ENCODE measurements at regions of chr17 and their contacts with region 1.

Region 1: DNA sequence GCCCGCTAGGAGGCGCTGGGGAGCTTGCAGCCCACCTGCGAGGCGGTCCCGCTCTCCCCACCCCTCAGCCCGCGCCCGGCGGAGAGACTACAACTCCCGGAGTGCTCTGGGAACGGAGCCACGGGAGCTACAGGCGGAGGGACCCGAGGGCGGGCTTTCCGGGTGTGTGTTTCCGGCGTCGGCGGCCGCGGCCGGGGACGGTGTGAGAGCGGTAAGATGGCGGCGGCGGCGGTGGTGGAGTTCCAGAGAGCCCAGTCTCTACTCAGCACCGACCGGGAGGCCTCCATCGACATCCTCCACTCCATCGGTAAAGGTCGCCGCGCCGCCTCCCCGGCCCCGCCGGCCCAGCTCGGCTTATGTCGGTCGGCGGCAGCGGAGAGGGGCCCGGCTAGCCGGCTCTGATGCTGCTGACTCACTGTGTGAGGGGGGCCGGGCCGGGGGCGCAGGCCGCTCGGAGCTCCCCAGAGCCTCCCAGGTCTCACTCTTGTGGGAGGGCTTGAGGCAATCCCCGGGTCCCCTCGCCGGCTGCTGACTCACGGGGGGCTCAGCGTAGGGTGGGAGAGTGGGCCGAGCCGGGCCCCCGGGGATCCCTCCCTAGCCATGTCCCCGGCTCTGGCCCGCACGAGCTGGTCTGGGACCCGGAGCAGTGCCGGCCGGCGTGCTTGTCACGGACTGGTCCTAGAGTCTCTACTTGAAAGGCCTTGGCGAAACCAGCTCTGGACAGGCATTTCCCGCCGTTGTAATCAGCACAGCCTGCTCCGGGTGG is at the start of gene PSMD11:
- DNase-seq: peak; percentile 87 to 90 (median 88)
- H3K4me3 ChIP-seq: peak within 1 kb of the TSS; percentile 63 to 95 (median 84)
- H3K4me3 Mint-ChIP-seq: peak within 1 kb of the TSS; percentile 91 to 93
- H3K27ac ChIP-seq: peak within 1 kb of the TSS; percentile 38 to 87
- H3K27ac Mint-ChIP-seq: peak within 1 kb of the TSS; percentile 78 to 93 (median 91)
- H3K4me1 ChIP-seq: peaks cover 18 to 26% of the 10 kb centered on the region in 2 donors
- H3K4me1 Mint-ChIP-seq: peaks cover 24% of the 10 kb centered on the region
- H3K27me3 ChIP-seq: no peaks in the 10 kb centered on the region
- H3K27me3 Mint-ChIP-seq: peaks cover 11 to 20% (median 16%) of the 10 kb centered on the region in 3 donors
- CTCF ChIP-seq: no peak
- polyA plus RNA-seq, gene PSMD11: 29.9 to 112 (median 91.8) TPM

Region 2: DNA sequence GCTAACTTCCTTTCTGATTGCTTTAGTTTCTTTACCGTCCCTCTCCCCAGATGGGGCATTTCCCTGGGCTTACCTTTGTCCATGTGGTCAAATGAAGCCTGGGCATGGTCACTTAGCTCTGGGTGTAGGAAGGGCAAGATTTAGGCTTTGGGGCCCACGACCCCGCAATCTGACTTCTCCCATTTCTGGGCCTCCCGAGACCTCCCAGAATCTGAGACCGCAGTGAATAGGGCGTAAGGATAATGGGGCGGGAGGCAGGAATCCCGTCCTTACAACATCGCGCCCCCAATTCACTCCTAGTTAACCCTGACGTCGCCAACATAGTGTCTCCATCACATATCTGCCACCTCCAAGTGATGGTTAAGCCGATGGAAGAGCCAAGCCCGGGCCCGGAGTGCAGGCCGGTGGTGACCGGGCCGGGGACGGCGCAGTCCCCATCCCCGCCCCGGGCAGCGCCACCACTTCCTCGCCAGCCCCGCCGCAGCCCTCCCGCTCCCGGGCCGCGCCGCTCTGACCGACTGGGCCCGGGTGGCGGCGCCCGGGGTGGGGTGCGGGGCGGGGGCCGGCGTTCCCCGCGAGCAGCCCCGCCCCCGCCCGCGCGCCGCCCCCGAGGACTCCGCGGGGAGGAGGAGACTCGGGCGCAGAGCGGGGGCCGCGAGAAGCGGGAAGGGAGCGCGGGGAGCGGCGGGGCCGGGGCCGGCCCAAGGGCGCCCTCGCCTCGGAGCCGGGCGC is 179.1 kb before region 1 on chr17 and contains the start of gene RHBDL3:
- intact Hi-C with region 1: loop called in 1 of 2 experiments (anchors 10 kb)
- DNase-seq: peak in 1 of 3 donors; percentile 17
- H3K4me3 ChIP-seq: peak within 1 kb of the TSS; percentile 12 to 70 (median 48)
- H3K4me3 Mint-ChIP-seq: peak within 1 kb of the TSS; percentile 81 to 88
- H3K27ac ChIP-seq: no peak within 1 kb of the TSS
- H3K27ac Mint-ChIP-seq: peak within 1 kb of the TSS in 4 of 7 donors; percentile 41 to 63 (median 53)
- H3K4me1 ChIP-seq: peaks cover 14 to 21% of the 10 kb centered on the region in 2 donors
- H3K4me1 Mint-ChIP-seq: peaks cover 20% of the 10 kb centered on the region
- H3K27me3 ChIP-seq: peaks cover 59 to 81% of the 10 kb centered on the region in 2 donors
- H3K27me3 Mint-ChIP-seq: peaks cover 83 to 96% (median 84%) of the 10 kb centered on the region in 3 donors
- CTCF ChIP-seq: no peak
- polyA plus RNA-seq, gene RHBDL3: 0.05 TPM in 1 of 3 donors, not detected in the others

Region 3: DNA sequence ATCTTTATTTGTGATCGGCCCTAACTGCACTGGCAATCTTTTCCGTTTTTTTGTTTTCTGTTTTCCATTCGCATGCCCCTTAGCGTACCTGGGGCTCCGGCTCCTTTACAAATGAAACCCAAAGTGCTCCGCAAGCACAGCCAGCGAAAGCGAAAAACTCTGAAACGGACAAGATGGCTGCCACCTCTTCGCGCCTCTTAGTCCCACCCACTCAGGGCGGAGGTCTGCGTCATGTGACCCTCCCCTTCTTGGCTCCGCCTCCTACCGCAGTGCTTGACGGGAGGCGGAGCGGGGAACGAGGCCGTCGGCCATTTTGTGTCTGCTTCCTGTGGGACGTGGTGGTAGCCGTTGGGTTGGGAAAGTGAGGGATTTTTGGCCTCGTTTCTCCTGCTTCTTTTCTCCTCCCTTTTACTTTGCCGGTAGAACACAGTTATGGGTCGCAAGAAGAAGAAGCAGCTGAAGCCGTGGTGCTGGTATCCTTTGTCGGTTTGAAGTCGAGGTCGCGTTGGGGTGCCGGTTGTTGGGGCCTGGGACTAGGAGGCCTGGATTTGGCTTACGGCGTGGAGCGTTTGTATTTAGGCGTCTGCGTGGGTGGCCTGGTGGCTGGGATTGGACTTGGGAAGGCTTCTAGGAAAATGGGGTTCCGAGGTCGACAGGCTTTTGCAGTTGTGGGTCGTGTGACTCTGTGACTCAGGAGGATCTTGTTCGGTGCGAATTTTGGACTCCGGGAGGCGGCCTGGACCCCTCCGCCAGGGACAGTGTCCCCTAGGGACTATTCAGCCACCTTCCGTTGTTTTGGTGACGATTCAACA is 94.4 kb before region 1 on chr17 and contains the start of gene ZNF207:
- intact Hi-C with region 1: loop called in 1 of 2 experiments (anchors 5 kb)
- DNase-seq: peak; percentile 97
- H3K4me3 ChIP-seq: peak within 1 kb of the TSS; percentile 63 to 98 (median 88)
- H3K4me3 Mint-ChIP-seq: peak within 1 kb of the TSS; percentile 99 to 100
- H3K27ac ChIP-seq: peak within 1 kb of the TSS; percentile 89 to 98
- H3K27ac Mint-ChIP-seq: peak within 1 kb of the TSS; percentile 99 to 100 (median 100)
- H3K4me1 ChIP-seq: peaks cover 25 to 41% of the 10 kb centered on the region in 2 donors
- H3K4me1 Mint-ChIP-seq: peaks cover 29% of the 10 kb centered on the region
- H3K27me3 ChIP-seq: no peaks in the 10 kb centered on the region
- H3K27me3 Mint-ChIP-seq: peaks cover 0 to 5% (median 0%) of the 10 kb centered on the region in 3 donors
- CTCF ChIP-seq: no peak
- polyA plus RNA-seq, gene ZNF207: 129 to 147 (median 138) TPM

Region 4: GRCh38 chr17:32479074-32479617 is 34.7 kb after region 1 on chr17:
- intact Hi-C with region 1: no loop called
- DNase-seq: no peak
- H3K4me3 ChIP-seq: no peak overlapping the region
- H3K4me3 Mint-ChIP-seq: peak overlapping the region in 1 of 2 donors; percentile 0
- H3K27ac ChIP-seq: no peak overlapping the region
- H3K27ac Mint-ChIP-seq: no peak overlapping the region
- H3K4me1 ChIP-seq: no peaks in the 10 kb centered on the region
- H3K4me1 Mint-ChIP-seq: no peaks in the 10 kb centered on the region
- H3K27me3 ChIP-seq: no peaks in the 10 kb centered on the region
- H3K27me3 Mint-ChIP-seq: no peaks in the 10 kb centered on the region
- CTCF ChIP-seq: no peak

Measured in CD14-positive monocyte (primary cell).